H1 (cell line): ENCODE measurements at regions of chr9 and their contacts with region 1.

Region 1: GRCh38 chr9:120936011-120936763 is 9.6 kb upstream of the TRAF1 start:
- DNase-seq: peak; percentile 66 to 96
- H3K4me3 ChIP-seq: no peak overlapping the region
- H3K27ac ChIP-seq: no peak overlapping the region
- H3K4me1 ChIP-seq: peaks cover 0 to 2% (median under 1%) of the 10 kb centered on the region in 4 experiments; a peak in 2 of 7 replicates
- H3K27me3 ChIP-seq: no peaks in the 10 kb centered on the region
- CTCF ChIP-seq: peak; percentile 92 to 93 (median 92)
- EP300 ChIP-seq: no peak
- POLR2A ChIP-seq: no peak
- RAD21 ChIP-seq: peak; percentile 89 to 92

Region 2: DNA sequence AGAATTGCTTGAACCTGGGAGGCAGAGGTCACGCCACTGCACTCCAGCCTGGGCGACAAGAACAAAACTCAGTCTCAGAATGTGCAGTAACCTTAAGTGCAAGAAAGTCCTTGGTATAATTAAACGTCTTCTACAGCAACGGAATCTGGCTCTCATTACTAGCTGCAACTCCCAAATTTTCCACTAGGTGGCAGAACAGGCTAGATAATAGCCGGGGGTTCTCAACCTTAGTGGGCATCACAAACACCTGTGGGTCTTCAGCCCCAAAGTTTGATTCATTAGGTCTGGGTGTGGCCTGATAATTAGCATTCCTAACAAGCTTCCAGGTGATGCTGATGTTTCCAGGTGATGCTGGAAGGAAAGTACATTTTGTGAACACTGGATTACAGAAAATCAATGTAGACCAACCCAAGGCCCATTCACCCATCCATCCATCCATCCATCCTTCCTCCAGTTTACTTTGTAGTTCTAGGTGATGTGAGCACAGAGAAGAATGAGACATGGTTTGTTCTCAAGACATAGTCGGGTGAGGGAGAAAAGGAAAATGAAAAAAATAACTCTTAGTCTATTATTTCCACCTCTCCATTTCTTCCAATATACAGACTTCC is 180.3 kb before region 1 on chr9:
- CTCF ChIA-PET with region 1: interaction called, 10 read pairs
- POLR2A ChIA-PET with region 1: no interaction called
- DNase-seq: peak; percentile 13 to 85
- H3K4me3 ChIP-seq: no peak overlapping the region
- H3K27ac ChIP-seq: no peak overlapping the region
- H3K4me1 ChIP-seq: no peaks in the 10 kb centered on the region
- H3K27me3 ChIP-seq: no peaks in the 10 kb centered on the region
- CTCF ChIP-seq: peak in 2 of 3 experiments; percentile 84 to 85; a peak in 3 of 4 replicates
- EP300 ChIP-seq: no peak
- POLR2A ChIP-seq: no peak
- RAD21 ChIP-seq: peak; percentile 89 to 93

Region 3: GRCh38 chr9:120916588-120916987 is 19.6 kb before region 1 on chr9:
- CTCF ChIA-PET with region 1: interaction called, 15 read pairs
- POLR2A ChIA-PET with region 1: interaction called, 3 read pairs
- DNase-seq: no peak
- H3K4me3 ChIP-seq: no peak overlapping the region
- H3K27ac ChIP-seq: no peak overlapping the region
- H3K4me1 ChIP-seq: peaks cover 0 to 6% (median 3%) of the 10 kb centered on the region in 4 experiments; a peak in 4 of 7 replicates
- H3K27me3 ChIP-seq: no peaks in the 10 kb centered on the region; a peak in 1 of 7 replicates
- CTCF ChIP-seq: peak; percentile 19 to 36 (median 30)
- EP300 ChIP-seq: no peak
- POLR2A ChIP-seq: no peak
- RAD21 ChIP-seq: peak; percentile 28 to 53; a peak in 3 of 4 replicates

Region 4: GRCh38 chr9:121411993-121412392 is 475.8 kb after region 1 on chr9:
- CTCF ChIA-PET with region 1: no interaction called
- POLR2A ChIA-PET with region 1: no interaction called
- DNase-seq: no peak
- H3K4me3 ChIP-seq: no peak overlapping the region
- H3K27ac ChIP-seq: no peak overlapping the region
- H3K4me1 ChIP-seq: 0 out of 7 replicates have a peak, but pooled peaks cover 0 to 3% (median 1%) of the 10 kb centered on the region in 4 experiments
- H3K27me3 ChIP-seq: no peaks in the 10 kb centered on the region
- CTCF ChIP-seq: no peak
- EP300 ChIP-seq: no peak
- POLR2A ChIP-seq: no peak
- RAD21 ChIP-seq: no peak